GM10248 (cell line): ENCODE measurements at regions of chr22 and their contacts with region 1.

Region 1: DNA sequence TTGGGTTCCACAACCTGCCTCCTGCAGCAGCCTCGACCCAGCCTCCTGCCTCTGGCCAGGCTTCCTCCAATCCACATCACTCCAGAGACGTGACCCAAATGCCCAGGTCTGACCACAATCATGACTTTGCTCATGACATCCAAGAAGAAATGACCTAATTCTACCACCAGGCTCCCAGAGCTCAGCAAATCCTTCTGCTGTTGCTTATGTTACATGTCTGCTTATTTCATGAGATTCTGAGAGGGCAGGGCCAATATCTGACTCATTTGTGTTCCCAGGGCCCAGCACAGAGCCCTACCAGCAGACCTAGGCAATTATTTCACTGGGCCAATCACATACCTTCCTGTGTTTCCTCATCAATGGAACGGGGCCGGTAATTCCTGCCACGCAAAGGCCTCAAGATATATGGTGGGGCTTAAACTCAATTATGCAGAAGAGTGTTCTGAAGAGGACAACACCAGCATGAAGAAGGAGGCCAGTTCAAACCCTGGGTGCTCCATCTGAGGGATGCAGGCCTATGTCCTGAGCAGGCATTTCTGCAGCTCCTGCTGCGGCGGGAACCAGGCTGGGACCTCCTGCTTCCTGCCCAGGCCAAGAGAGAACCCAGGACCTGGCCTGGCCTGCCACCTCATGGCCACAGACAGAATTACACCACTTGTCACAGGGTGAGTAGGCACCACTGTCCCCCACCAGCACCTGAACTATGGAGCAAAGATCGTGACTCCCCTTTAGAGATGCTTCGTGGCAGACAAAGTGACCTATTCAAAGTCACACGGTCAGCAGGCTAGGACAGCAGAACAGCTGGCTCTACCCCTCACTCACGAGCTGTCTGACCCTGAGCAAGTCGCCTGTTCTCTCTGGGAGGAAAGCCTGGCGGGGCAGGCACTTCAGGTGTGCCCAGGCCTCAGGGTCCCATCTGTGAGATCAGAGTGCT is 5.9 kb downstream of the CENPM start:
- DNase-seq: peak; percentile 72
- CTCF ChIP-seq: peak; percentile 86

Region 2: GRCh38 chr22:41666661-41667258 is 274.3 kb before region 1 on chr22:
- CTCF ChIA-PET with region 1: interaction called, 34 read pairs
- POLR2A ChIA-PET with region 1: interaction called, 4 read pairs
- DNase-seq: peak; percentile 99
- CTCF ChIP-seq: peak; percentile 99

Region 3: DNA sequence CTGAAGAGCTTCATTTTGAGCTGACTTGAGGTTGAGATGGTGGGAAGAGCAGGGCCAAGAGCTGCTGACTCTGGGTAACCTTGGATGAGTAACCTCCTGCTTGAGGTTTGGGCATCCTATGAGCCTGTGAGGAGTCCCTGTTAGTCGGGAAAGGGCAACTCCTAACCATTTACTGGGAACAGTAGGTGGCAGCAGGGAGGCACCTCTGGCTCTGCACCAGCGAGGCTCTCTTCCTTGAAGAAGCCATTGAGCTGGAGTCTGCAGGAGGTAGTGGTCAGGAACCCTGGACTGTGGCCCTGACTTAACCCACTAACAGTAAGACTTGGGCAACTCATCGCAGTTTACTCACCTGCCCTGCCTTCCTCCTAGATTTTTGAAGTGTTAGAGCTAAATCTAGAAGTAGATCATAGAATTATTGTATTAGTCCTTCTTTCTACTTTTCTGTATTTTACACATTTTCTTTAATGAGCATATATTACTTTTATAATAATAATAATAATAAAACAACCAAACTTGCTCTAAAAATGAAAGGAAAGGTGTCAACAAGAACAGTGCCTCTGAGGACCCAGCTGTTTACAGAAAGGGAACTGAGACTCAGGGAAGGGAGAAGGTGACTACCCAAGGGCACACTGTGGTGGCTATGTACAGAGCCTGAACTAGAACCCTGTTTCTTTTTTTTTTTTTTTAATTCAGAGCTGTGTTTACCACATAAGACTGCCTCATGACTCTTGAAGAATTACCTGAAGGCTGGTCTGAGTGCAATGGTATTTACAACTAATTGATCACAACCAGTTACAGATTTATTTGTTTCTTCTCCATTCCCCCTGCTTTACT is 194.3 kb before region 1 on chr22:
- CTCF ChIA-PET with region 1: interaction called, 18 read pairs
- POLR2A ChIA-PET with region 1: no interaction called
- DNase-seq: peak; percentile 69
- CTCF ChIP-seq: peak; percentile 79

Region 4: DNA sequence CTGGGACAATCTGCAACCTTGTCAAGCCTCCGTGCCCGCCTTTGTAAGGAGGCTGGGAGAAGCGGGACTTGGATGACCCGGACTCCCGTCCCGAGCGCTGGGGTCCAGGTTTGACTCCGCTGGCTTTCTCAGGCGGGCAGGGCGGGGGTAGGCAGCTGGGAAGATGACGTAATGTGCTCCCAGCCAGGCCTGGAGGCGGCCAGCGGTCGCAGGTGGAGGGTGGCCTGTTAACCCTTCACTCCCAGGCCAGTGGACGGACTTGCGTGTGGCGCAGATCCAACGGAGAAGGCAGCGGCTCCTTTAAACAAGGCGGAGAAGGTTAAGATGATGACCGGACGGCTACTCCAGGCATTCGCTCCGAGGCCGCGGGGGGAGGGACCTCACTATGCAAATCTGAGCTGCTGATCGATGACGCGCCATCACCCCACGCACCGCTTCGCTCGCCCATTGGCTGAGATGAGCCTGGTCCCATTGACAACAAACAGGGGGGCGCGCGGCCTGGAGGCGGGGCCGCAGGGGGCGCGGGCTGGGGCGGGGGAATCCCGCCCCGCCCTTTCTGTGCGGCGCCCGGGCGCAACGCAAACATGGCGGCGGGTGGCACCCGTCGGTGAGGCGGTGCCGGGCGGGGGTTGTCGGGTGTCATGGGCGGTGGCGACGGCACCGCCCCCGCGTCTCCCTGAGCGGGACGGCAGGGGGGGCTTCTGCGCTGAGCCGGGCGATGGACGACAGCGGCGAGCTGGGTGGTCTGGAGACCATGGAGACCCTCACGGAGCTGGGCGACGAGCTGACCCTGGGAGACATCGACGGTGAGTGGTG is 108.3 kb before region 1 on chr22 and contains the start of gene SREBF2:
- CTCF ChIA-PET with region 1: interaction called, 33 read pairs
- POLR2A ChIA-PET with region 1: interaction called, 5 read pairs
- DNase-seq: peak; percentile 99
- CTCF ChIP-seq: no peak

Region 5: GRCh38 chr22:41919357-41920224 is 21.5 kb before region 1 on chr22:
- CTCF ChIA-PET with region 1: interaction called, 229 read pairs
- POLR2A ChIA-PET with region 1: interaction called, 118 read pairs
- DNase-seq: peak; percentile 87
- CTCF ChIP-seq: no peak

Region 6: GRCh38 chr22:41951898-41952474 is 10.9 kb after region 1 on chr22 and contains the start of gene SMIM45:
- CTCF ChIA-PET with region 1: interaction called, 25 read pairs
- POLR2A ChIA-PET with region 1: interaction called, 5 read pairs
- DNase-seq: no peak
- CTCF ChIP-seq: no peak